Calu3 (cell line): ENCODE measurements at regions of chr6 and their contacts with region 1.

Region 1: GRCh38 chr6:23584124-23584763 is 541.8 kb upstream of the NRSN1 start:
- DNase-seq: no peak
- H3K4me3 Mint-ChIP-seq: no peak overlapping the region
- H3K27ac Mint-ChIP-seq: no peak overlapping the region
- H3K4me1 Mint-ChIP-seq: no peaks in the 10 kb centered on the region
- H3K27me3 Mint-ChIP-seq: no peaks in the 10 kb centered on the region
- CTCF ChIP-seq: no peak

Region 2: DNA sequence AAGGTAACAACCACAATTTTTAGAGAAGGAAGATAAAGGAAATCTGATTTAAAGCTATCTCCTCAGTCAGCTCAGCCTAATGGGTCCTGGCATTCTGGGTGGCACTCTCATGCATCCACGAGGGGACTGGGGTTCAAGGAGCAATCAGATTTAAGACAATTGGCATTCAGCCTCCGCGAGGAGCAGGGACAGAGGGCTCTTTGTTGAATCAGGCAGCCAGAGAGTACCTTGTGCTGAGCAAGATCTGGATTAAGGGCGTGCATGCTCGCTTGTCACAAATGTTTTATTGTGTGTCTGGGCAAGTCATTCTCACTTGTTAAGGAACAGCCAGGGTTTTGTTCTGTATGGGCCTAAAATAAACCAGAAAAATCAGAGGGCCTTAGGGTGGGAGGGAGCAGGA is 66.4 kb after region 1 on chr6:
- CTCF ChIA-PET with region 1: interaction called, 3 read pairs
- intact Hi-C with region 1: loop called (anchors 5 kb)
- DNase-seq: peak; percentile 65
- H3K4me3 Mint-ChIP-seq: no peak overlapping the region
- H3K27ac Mint-ChIP-seq: peak overlapping the region; percentile 1
- H3K4me1 Mint-ChIP-seq: peaks cover 34% of the 10 kb centered on the region
- H3K27me3 Mint-ChIP-seq: no peaks in the 10 kb centered on the region
- CTCF ChIP-seq: no peak